ENCODE measurements at regions of chr22 and their contacts with region 1.

Region 1: DNA sequence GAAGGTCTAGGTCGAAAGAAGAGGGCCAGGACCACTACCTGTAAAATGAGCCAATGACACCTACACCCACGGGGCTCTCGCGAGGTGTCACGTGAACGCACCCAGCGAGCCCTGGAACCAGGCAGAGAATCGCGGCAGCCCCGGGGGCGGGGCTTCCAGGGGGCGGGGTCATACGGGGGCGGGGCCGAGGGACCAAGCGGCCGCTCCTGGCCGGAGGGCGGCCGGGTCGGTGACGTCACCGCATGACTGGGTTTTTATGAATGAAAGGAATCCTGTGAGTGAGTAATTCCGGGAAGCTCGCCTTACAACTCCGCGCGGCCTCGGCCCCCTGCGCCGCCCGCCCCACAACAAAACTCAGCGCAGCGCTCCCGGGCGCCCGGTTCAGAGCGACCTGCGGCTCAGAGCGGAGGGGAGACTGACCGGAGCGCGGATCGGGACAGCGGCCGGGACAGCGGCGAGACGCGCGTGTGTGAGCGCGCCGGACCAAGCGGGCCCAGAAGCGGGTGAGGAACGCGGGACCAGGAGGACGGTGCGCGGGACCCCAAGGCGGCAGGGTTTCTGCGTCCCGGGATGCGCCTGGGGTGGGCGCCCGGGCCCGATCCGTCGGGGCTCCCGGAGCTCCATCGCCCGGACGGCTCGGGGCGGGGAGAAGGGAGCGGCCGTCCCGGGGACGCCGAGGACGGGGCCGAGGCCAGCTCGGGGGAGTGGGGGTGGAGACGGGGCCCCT is at the start of gene MAFF:
- DNase-seq: peak; percentile 95
- H3K4me3 ChIP-seq: peak within 1 kb of the TSS; percentile 78 to 91 (median 87)
- H3K27ac ChIP-seq: peak within 1 kb of the TSS; percentile 77
- H3K4me1 ChIP-seq: peaks cover 23% of the 10 kb centered on the region
- H3K27me3 ChIP-seq: no peaks in the 10 kb centered on the region
- CTCF ChIP-seq: no peak
- total RNA-seq, gene MAFF: 17.0 to 48.5 TPM

Region 2: DNA sequence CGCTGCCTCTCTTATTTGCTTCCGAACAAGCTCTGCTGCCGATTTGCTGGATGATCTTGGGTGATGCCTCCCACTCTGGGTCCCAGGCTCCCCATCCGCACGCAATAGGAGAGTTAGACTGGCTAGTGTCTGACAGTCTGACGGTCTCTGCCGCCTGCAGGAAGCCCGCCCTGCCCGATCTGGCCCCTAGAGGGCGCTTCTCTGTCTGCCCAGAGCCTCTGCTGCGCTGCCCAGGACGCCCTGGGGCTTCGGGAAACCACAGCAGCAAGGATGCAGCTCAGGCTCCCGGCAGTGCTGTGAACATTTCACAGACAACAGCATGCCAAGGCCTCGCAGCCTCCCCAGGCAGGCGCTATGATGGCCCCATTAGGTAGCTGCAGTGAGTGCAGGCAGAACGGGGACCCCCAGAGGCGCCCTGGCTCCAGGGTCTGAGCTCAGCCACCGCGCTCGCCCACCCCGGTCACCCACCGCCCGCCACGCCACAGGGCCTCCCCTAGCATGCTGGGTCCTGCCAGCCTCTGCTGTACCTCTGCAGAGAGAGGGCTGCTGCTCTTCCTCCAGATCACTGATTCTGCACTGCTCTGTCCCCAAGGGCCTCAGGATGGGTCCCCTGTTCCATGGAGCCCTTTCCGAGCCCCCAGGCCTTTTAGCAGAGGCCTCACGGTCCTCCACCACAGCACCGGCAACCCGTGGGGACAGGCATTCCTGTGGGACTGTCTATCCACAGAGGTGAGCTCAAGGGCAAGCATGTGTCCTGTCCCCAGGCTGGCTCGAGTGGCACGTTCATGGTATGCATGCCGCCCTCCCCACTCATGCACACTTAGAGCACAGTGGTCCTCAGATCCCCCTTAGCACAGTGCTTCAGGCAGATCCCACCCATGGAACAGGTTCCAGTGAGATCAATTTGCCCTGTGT is 87.1 kb before region 1 on chr22:
- CTCF ChIA-PET with region 1: interaction called, 3 read pairs
- dilution Hi-C with region 1: no loop called
- in situ Hi-C with region 1: loop called (anchors 10 kb)
- intact Hi-C with region 1: loop called (anchors 1 kb)
- DNase-seq: peak; percentile 67
- H3K4me3 ChIP-seq: no peak overlapping the region
- H3K27ac ChIP-seq: no peak overlapping the region
- H3K4me1 ChIP-seq: peaks cover 7% of the 10 kb centered on the region
- H3K27me3 ChIP-seq: no peaks in the 10 kb centered on the region
- CTCF ChIP-seq: peak; percentile 96 to 98

Region 3: DNA sequence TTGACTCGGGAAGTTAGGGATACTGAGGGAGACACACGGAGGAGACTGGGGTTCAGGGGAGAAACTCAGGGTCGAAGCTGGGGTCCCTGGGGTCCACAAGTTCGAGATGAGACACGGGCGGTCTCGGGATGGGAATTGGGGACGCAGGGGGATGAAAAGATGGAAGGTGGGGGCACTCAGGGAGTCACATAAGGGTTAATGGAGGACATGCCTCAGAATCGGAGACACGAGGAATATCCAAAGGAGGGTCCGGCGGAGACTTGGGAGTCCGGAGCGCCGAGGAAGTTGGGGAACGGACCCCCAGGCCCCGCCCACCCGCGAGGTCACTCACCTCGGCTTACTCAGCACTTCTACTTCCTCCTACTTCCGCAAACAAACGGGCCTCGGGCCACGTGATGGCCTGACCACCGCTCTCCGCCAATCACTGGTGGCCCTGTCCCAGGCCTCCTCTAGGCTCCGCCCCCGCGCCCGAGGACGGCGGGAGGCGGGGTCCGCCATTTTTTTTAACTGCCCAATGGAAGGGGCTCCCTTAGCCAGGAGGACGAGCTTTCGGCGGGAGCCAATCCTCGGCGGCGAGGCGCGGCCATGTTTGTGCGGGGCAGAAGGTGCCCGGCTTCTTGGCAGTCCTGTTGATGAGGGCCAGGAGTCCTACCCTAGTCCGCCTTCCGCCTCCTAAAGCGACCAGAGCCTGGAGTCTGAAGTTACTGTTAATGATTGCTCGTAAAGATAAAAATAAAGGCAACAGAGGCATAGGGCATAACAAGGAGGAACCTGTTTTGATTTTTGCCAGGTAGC is 20.2 kb before region 1 on chr22 and contains the start of gene PLA2G6:
- CTCF ChIA-PET with region 1: no interaction called
- dilution Hi-C with region 1: no loop called
- in situ Hi-C with region 1: no loop called
- intact Hi-C with region 1: loop called (anchors 1 kb)
- DNase-seq: peak; percentile 99
- H3K4me3 ChIP-seq: peak within 1 kb of the TSS; percentile 43 to 51 (median 44)
- H3K27ac ChIP-seq: peak within 1 kb of the TSS; percentile 95
- H3K4me1 ChIP-seq: peaks cover 33% of the 10 kb centered on the region
- H3K27me3 ChIP-seq: no peaks in the 10 kb centered on the region
- CTCF ChIP-seq: no peak
- total RNA-seq, gene PLA2G6: 12.8 to 20.2 TPM

Region 4: DNA sequence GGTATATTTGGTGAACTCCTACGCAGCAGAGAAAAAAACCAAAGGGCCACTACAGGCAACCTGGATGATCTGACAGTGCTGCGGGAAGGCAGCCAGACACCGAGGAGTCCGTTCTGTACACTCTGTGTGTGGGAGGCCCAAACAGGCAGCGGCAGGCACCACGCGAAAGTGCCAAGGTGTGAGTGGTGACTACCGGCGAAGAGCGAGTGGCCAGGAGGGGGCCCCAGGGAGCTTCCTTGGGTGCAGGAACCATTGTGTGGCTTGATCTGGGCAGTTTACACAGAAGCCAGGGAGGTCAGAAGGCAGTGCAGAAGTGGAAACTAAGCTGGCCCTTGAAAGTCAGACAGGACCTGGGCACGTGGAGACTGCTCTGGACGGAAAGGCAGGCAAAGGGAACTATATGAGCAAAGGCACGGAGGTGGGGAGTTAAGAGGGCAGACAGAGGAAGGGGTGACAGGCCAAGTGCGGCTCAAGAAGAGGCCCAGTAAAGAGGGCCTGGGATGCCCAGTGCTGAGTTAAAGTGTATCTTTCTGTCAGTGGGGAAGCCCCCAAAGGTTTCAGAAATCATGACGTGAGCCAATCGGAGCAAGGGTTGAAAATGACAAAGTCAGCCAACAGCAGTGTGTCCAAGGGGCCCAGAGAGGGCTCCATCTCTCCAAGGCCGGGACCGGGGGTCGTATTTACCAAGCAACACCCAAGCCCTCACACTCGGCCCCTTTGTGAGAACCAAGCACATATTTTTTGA is 60.4 kb after region 1 on chr22:
- CTCF ChIA-PET with region 1: no interaction called
- dilution Hi-C with region 1: loop called (anchors 5 kb)
- in situ Hi-C with region 1: no loop called
- intact Hi-C with region 1: no loop called
- DNase-seq: peak; percentile 81
- H3K4me3 ChIP-seq: no peak overlapping the region
- H3K27ac ChIP-seq: no peak overlapping the region
- H3K4me1 ChIP-seq: peaks cover 15% of the 10 kb centered on the region
- H3K27me3 ChIP-seq: no peaks in the 10 kb centered on the region
- CTCF ChIP-seq: peak; percentile 51 to 85

Measured in mammary epithelial cell (primary cell).